Heart right ventricle (tissue), 16 donors: ENCODE measurements at regions of chr12 and their contacts with region 1.

Region 1: DNA sequence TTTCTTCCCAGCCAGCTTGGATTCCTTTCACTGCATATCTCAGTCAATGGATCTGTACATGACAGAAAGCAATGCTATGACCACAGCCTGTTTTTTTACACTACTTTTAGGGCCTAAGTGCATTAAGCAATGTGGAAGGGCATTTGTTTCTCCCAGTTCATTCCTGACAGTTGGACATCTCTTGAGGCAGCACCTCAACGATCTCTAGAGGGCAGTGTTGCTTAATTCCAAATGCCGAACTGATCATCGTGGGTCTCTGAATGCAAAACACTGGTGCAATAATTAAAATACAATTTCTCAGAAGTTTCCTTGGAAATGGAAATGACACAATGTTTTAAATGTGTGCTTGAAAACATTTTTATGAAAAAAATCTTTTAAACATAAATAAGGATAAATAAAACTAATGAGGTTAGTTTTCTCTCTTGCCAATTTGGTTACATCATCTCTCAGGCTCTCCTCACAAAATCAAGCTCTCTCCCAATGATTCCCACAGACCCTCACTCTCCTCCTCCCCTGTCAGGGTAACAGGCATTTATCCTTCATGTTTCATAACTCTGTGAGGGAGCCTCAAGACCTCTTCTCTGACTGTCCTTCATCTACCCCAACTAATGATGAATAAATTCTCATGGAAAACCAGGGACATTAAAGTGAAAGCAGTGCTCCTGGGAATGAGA is 192.4 kb upstream of the SLC16A7 start:
- DNase-seq: peak in 1 of 2 donors; percentile 41
- ATAC-seq: peak in 7 of 8 donors; percentile 54 to 79 (median 74)
- H3K4me3 ChIP-seq: peak overlapping the region in 2 of 10 donors; percentile 11 to 22
- H3K27ac ChIP-seq: no peak overlapping the region
- H3K4me1 ChIP-seq: peaks cover 0 to 8% (median 0%) of the 10 kb centered on the region in 9 donors
- H3K27me3 ChIP-seq: no peaks in the 10 kb centered on the region
- CTCF ChIP-seq: peak; percentile 49 to 82 (median 77)

Region 2: GRCh38 chr12:59357811-59358210 is 45.6 kb before region 1 on chr12:
- intact Hi-C with region 1: no loop called
- DNase-seq: no peak
- ATAC-seq: no peak
- H3K4me3 ChIP-seq: no peak overlapping the region
- H3K27ac ChIP-seq: no peak overlapping the region
- H3K4me1 ChIP-seq: no peaks in the 10 kb centered on the region
- H3K27me3 ChIP-seq: no peaks in the 10 kb centered on the region
- CTCF ChIP-seq: no peak

Region 3: GRCh38 chr12:59484575-59484974 is 81.2 kb after region 1 on chr12:
- intact Hi-C with region 1: no loop called
- DNase-seq: no peak
- ATAC-seq: no peak
- H3K4me3 ChIP-seq: no peak overlapping the region
- H3K27ac ChIP-seq: no peak overlapping the region
- H3K4me1 ChIP-seq: no peaks in the 10 kb centered on the region
- H3K27me3 ChIP-seq: no peaks in the 10 kb centered on the region
- CTCF ChIP-seq: no peak

Region 4: GRCh38 chr12:60494244-60494643 is 1090.8 kb after region 1 on chr12:
- intact Hi-C with region 1: loop called in 1 of 10 experiments (anchors 10 kb)
- DNase-seq: no peak
- ATAC-seq: no peak
- H3K4me3 ChIP-seq: no peak overlapping the region
- H3K27ac ChIP-seq: no peak overlapping the region
- H3K4me1 ChIP-seq: peaks cover 0 to 4% (median 0%) of the 10 kb centered on the region in 9 donors
- H3K27me3 ChIP-seq: no peaks in the 10 kb centered on the region
- CTCF ChIP-seq: peak in 8 of 9 donors; percentile 6 to 54 (median 44)